ENCODE measurements at regions of chr17 and their contacts with region 1.

Region 1: DNA sequence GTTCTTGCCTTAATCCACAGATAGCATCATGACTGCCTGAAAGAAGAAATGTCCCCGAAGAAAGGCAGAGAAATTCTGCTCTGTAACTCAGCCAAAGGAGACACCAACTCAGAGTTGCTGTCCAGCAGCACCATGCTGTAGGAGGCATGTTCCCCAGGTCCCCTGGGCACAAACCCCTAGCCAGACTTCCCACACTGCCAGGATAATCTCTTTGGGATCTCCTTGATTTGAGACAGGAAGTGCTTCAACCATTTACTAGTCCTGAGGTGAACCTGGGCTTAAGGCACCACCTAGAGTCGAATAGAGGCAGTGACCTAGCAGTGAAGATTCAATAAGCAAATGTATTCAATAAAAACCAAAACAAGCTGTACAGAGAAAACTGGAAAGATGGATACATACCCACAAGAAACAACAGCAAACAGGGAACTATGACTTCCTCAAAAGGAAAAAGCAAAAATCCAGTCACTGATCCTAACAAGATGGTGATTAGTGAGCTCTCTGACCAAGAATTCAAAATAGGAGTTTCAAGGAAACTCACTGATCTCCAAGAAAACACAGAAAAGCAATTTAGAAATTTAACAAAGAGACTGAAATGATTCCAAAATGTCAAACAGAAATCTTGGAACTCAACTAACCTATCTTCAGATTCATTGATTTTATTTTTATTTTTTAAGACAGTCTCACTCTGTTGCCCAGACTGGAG is 5.7 kb downstream of the OR4D2 start:
- DNase-seq: peak; percentile 69
- ATAC-seq: peak; percentile 96
- H3K4me3 Mint-ChIP-seq: no peak overlapping the region
- H3K27ac Mint-ChIP-seq: peak overlapping the region; percentile 49
- H3K4me1 Mint-ChIP-seq: peaks cover 39% of the 10 kb centered on the region
- H3K27me3 Mint-ChIP-seq: no peaks in the 10 kb centered on the region
- CTCF ChIP-seq: peak; percentile 79

Region 2: DNA sequence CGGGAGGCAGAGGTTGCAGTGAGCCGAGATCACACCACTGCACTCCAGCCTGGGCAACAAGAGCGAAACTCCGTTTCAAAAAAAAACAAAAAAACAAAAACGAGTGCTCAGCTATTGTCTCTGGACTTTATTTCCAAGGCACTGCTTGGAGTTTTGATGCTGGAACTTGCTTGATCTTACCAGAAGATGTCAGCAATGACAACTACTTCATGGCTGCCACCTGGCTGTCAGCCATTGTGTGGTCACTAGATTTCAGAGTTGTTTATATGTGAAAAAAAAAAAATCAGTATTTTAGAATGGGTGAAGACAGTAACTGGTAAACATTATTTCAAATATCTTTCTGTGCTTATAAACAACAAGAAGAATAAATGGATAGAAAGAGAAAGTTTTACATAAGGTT is 50.6 kb before region 1 on chr17:
- CTCF ChIA-PET with region 1: interaction called, 71 read pairs
- POLR2A ChIA-PET with region 1: interaction called, 3 read pairs
- intact Hi-C with region 1: loop called (anchors 2 kb)
- DNase-seq: peak; percentile 43
- ATAC-seq: peak; percentile 56
- H3K4me3 Mint-ChIP-seq: no peak overlapping the region
- H3K27ac Mint-ChIP-seq: no peak overlapping the region
- H3K4me1 Mint-ChIP-seq: peaks cover 6% of the 10 kb centered on the region
- H3K27me3 Mint-ChIP-seq: peaks cover 6% of the 10 kb centered on the region
- CTCF ChIP-seq: peak; percentile 37

Region 3: DNA sequence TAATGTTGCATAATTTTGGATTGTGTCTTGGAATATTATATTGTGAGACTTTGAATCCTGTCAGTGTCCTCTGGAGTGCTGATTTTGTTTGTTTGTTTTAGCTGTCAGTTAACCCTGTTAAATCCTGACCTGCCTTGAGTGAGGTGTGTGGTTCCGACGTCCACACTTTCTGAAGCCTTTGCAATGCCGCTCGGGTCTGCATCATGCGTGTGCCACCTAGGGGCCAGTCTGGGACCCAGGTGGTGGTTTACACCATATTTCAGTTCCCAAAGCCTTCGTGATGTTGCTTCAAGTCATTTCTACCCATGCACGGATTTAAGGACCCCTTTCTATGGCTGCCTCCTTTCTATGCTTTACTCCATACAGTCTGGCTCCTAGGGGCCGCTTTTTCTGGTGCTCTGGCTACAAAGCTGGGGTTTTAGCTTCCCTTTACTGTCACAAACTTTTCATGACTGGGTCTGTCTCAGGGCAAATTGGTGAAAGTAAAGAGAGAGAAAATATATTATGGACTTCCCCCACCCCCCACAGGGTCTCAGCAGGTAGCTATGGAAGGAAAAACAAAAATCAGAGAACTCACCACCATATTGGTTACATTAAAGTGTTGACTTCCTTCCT is 35.7 kb before region 1 on chr17:
- CTCF ChIA-PET with region 1: interaction called, 11 read pairs
- POLR2A ChIA-PET with region 1: no interaction called
- intact Hi-C with region 1: no loop called
- DNase-seq: no peak
- ATAC-seq: no peak
- H3K4me3 Mint-ChIP-seq: no peak overlapping the region
- H3K27ac Mint-ChIP-seq: no peak overlapping the region
- H3K4me1 Mint-ChIP-seq: no peaks in the 10 kb centered on the region
- H3K27me3 Mint-ChIP-seq: no peaks in the 10 kb centered on the region
- CTCF ChIP-seq: no peak

Region 4: GRCh38 chr17:58156839-58157803 is 15.4 kb before region 1 on chr17:
- CTCF ChIA-PET with region 1: interaction called, 25 read pairs
- POLR2A ChIA-PET with region 1: interaction called, 4 read pairs
- intact Hi-C with region 1: no loop called
- DNase-seq: peak; percentile 75
- ATAC-seq: peak; percentile 86
- H3K4me3 Mint-ChIP-seq: peak overlapping the region; percentile 81
- H3K27ac Mint-ChIP-seq: peak overlapping the region; percentile 83
- H3K4me1 Mint-ChIP-seq: peaks cover 39% of the 10 kb centered on the region
- H3K27me3 Mint-ChIP-seq: no peaks in the 10 kb centered on the region
- CTCF ChIP-seq: no peak

Region 5: DNA sequence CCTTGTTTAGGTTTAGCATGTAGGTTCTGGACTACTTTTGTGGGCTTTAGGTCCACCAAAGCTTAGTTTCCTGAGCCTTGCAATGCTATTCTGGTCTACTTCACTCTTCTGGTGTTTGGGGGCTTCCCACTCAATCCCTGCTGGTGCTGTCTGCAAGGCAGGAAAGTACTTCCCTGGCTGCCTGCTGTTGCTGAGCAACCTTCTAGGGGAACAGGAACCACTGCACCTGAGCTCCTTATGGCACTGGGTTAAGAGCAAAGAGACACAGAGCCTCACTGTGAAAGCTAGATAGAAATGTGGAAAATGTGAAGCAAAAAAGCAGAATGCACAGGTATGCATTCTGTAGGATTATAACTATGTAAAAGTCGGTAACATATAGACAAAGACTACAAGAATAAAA is 91.3 kb after region 1 on chr17:
- CTCF ChIA-PET with region 1: no interaction called
- POLR2A ChIA-PET with region 1: no interaction called
- intact Hi-C with region 1: no loop called
- DNase-seq: no peak
- ATAC-seq: no peak
- H3K4me3 Mint-ChIP-seq: no peak overlapping the region
- H3K27ac Mint-ChIP-seq: no peak overlapping the region
- H3K4me1 Mint-ChIP-seq: no peaks in the 10 kb centered on the region
- H3K27me3 Mint-ChIP-seq: peaks cover 39% of the 10 kb centered on the region
- CTCF ChIP-seq: no peak

Measured in activated CD8-positive, alpha-beta T cell treated with anti-CD3 and anti-CD28 coated beads for 36 hours (primary cell).